CD4-positive, alpha-beta T cell (primary cell): ENCODE measurements at regions of chr3 and their contacts with region 1.

Region 1: GRCh38 chr3:31573036-31573779 is 40.5 kb downstream of the STT3B start:
- DNase-seq: no peak
- ATAC-seq: no peak
- H3K4me3 ChIP-seq: no peak overlapping the region
- H3K4me3 Mint-ChIP-seq: no peak overlapping the region
- H3K27ac ChIP-seq: no peak overlapping the region
- H3K27ac Mint-ChIP-seq: no peak overlapping the region
- H3K4me1 ChIP-seq: peaks cover 20% of the 10 kb centered on the region
- H3K4me1 Mint-ChIP-seq: peaks cover 35% of the 10 kb centered on the region
- H3K27me3 ChIP-seq: no peaks in the 10 kb centered on the region
- H3K27me3 Mint-ChIP-seq: no peaks in the 10 kb centered on the region
- CTCF ChIP-seq: no peak

Region 2: GRCh38 chr3:31341130-31341529 is 232.1 kb before region 1 on chr3:
- CTCF ChIA-PET with region 1: no interaction called
- POLR2A ChIA-PET with region 1: no interaction called
- intact Hi-C with region 1: no loop called
- DNase-seq: no peak
- ATAC-seq: no peak
- H3K4me3 ChIP-seq: no peak overlapping the region
- H3K4me3 Mint-ChIP-seq: no peak overlapping the region
- H3K27ac ChIP-seq: no peak overlapping the region
- H3K27ac Mint-ChIP-seq: no peak overlapping the region
- H3K4me1 ChIP-seq: no peaks in the 10 kb centered on the region
- H3K4me1 Mint-ChIP-seq: no peaks in the 10 kb centered on the region
- H3K27me3 ChIP-seq: no peaks in the 10 kb centered on the region
- H3K27me3 Mint-ChIP-seq: no peaks in the 10 kb centered on the region
- CTCF ChIP-seq: no peak

Region 3: GRCh38 chr3:31485196-31485595 is 88.0 kb before region 1 on chr3:
- CTCF ChIA-PET with region 1: no interaction called
- POLR2A ChIA-PET with region 1: no interaction called
- intact Hi-C with region 1: no loop called
- DNase-seq: no peak
- ATAC-seq: no peak
- H3K4me3 ChIP-seq: no peak overlapping the region
- H3K4me3 Mint-ChIP-seq: no peak overlapping the region
- H3K27ac ChIP-seq: no peak overlapping the region
- H3K27ac Mint-ChIP-seq: no peak overlapping the region
- H3K4me1 ChIP-seq: no peaks in the 10 kb centered on the region
- H3K4me1 Mint-ChIP-seq: no peaks in the 10 kb centered on the region
- H3K27me3 ChIP-seq: no peaks in the 10 kb centered on the region
- H3K27me3 Mint-ChIP-seq: no peaks in the 10 kb centered on the region
- CTCF ChIP-seq: no peak

Region 4: GRCh38 chr3:31610700-31611275 is 37.6 kb after region 1 on chr3:
- CTCF ChIA-PET with region 1: no interaction called
- POLR2A ChIA-PET with region 1: no interaction called
- intact Hi-C with region 1: loop called in 1 of 2 experiments (anchors 5 kb)
- DNase-seq: peak in 3 of 14 experiments; percentile 14 to 38 (median 25)
- ATAC-seq: no peak
- H3K4me3 ChIP-seq: no peak overlapping the region
- H3K4me3 Mint-ChIP-seq: no peak overlapping the region
- H3K27ac ChIP-seq: no peak overlapping the region
- H3K27ac Mint-ChIP-seq: peak overlapping the region; percentile 6
- H3K4me1 ChIP-seq: no peaks in the 10 kb centered on the region
- H3K4me1 Mint-ChIP-seq: peaks cover 82% of the 10 kb centered on the region
- H3K27me3 ChIP-seq: no peaks in the 10 kb centered on the region
- H3K27me3 Mint-ChIP-seq: no peaks in the 10 kb centered on the region
- CTCF ChIP-seq: no peak